ENCODE measurements at regions of chr12 and their contacts with region 1.

Region 1: DNA sequence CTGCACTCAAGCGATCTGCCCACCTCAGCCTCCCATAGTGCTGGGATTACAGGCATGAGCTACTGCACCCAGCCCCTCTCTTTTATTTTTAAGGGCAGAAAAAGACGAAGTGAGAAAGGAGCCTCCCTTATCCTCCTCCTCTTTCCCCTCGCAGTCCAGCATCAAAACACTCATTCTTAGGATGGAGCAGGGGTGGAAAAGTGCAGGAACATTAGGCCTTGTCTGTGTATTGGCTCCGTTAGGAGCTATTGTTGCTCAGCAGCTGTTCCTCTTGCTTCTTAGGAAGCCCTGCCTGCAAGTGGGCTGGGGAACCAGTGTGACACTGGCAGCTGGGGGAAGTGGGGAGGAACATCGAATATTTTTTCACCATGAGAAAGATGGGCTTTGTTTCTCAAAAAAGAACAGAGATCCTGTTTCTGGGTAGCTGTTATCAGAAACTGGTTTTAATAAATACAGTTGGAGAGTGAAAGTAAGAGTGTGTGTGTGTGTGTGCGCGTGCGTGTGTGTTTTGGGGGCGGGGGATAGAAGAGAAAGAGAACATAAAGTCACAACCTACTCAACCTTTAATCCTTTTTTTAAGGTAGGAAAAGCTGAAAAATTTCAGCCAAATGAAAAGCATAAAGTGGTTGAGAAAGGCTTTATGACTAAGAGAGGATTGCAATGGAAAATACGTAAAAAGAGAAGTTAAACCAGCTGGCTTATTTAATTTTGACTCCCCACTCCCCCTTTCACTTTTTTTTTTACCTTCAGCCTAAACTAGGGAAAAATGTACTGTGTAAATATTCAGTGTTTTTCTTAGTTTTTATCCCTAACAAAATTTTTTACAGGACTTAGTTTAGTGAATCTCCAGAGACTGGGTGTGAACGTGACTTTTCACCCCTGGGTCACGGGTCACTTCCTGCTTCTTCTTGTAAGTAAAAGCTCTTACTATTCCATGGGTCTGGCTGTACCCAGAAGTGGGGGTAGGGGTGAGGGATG is 197.2 kb upstream of the PLEKHG7 start:
- DNase-seq: peak; percentile 64 to 83 (median 74)
- H3K4me3 ChIP-seq: peak overlapping the region in 2 of 3 experiments; percentile 23 to 50
- H3K4me3 Mint-ChIP-seq: peak overlapping the region; percentile 40 to 78
- H3K27ac ChIP-seq: peak overlapping the region; percentile 93 to 99
- H3K27ac Mint-ChIP-seq: peak overlapping the region; percentile 98 to 100 (median 99)
- H3K4me1 ChIP-seq: peaks cover 43 to 52% of the 10 kb centered on the region in 2 donors
- H3K4me1 Mint-ChIP-seq: peaks cover 50% of the 10 kb centered on the region
- H3K27me3 ChIP-seq: no peaks in the 10 kb centered on the region
- H3K27me3 Mint-ChIP-seq: peaks cover 0 to 3% (median 0%) of the 10 kb centered on the region in 3 donors
- CTCF ChIP-seq: no peak

Region 2: GRCh38 chr12:91877022-91877421 is 628.5 kb before region 1 on chr12:
- intact Hi-C with region 1: loop called in 1 of 2 experiments (anchors 10 kb)
- DNase-seq: peak; percentile 94 to 98 (median 97)
- H3K4me3 ChIP-seq: peak overlapping the region in 1 of 3 experiments; percentile 22
- H3K4me3 Mint-ChIP-seq: peak overlapping the region in 1 of 2 donors; percentile 77
- H3K27ac ChIP-seq: peak overlapping the region; percentile 46 to 89
- H3K27ac Mint-ChIP-seq: peak overlapping the region; percentile 87 to 97 (median 93)
- H3K4me1 ChIP-seq: peaks cover 26 to 34% of the 10 kb centered on the region in 2 donors
- H3K4me1 Mint-ChIP-seq: peaks cover 29% of the 10 kb centered on the region
- H3K27me3 ChIP-seq: no peaks in the 10 kb centered on the region
- H3K27me3 Mint-ChIP-seq: peaks cover 0 to 2% (median 1%) of the 10 kb centered on the region in 3 donors
- CTCF ChIP-seq: no peak

Region 3: DNA sequence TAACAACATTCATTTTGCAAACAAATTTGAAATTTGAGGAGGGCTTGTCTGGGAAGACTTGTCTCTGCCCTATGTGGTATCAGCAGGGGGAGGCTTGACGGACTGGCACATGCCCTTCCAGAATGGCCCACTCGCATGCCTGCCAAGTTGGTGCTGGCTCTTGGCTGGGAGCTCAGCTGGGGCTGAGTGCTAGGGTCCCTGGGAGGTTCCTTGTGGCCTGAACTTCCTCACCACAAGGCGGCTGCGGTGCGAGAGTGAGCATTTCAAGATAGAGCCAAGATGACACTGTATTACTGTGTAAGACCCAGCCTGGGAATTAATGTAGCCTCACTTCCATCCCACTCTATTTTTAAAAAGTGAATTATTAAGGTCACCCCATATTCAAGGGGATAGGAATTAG is 74.4 kb before region 1 on chr12:
- intact Hi-C with region 1: loop called in 1 of 2 experiments (anchors 10 kb)
- DNase-seq: peak in 2 of 3 donors; percentile 34 to 50
- H3K4me3 ChIP-seq: no peak overlapping the region
- H3K4me3 Mint-ChIP-seq: no peak overlapping the region
- H3K27ac ChIP-seq: no peak overlapping the region
- H3K27ac Mint-ChIP-seq: no peak overlapping the region
- H3K4me1 ChIP-seq: peaks cover 9 to 14% of the 10 kb centered on the region in 2 donors
- H3K4me1 Mint-ChIP-seq: peaks cover 26% of the 10 kb centered on the region
- H3K27me3 ChIP-seq: no peaks in the 10 kb centered on the region
- H3K27me3 Mint-ChIP-seq: peaks cover 0 to 5% (median 3%) of the 10 kb centered on the region in 3 donors
- CTCF ChIP-seq: peak; percentile 30

Region 4: DNA sequence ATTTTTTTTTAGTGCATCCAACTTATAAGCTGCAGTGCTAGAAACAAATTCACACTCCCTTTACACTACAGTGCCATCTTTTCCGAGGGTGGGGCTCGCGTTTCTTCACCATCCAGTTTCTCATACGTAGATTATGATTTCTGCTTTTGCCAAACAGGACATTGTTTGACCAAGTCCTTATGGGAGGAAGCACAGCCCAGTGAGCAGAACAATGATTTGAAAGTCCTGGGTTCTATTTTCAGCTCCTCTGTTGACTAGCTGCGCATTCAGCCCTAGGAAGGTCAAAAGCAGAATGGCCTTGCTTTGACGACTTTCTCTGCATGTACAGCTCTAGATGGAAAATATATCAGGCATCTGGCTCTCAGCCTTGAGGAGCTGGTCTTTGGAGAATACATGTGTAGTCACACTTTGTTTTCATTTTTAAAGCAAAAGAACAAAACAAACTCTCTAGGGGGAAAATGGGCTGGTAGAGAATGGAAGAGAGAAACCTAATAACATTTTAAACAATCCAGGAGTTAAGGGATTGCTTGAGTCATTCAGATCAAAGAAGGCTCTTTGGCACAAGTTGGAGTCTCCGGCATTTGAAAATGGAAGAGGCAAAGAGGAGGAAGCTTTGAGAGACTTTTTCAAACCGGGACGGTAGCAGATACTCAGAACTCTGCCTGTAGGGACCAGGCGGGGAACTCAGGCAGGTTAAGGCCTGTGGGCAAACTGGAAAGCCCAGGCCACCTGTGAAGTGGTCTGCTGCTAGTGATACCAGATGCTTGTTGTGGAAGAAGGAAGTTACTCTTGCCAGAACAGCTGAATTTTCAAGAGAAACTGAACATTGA is 60.1 kb before region 1 on chr12:
- intact Hi-C with region 1: loop called in 1 of 2 experiments (anchors 5 kb)
- DNase-seq: peak; percentile 46 to 54 (median 49)
- H3K4me3 ChIP-seq: peak overlapping the region in 2 of 3 experiments; percentile 5 to 13
- H3K4me3 Mint-ChIP-seq: peak overlapping the region in 1 of 2 donors; percentile 60
- H3K27ac ChIP-seq: peak overlapping the region; percentile 45 to 82
- H3K27ac Mint-ChIP-seq: peak overlapping the region; percentile 91 to 98 (median 94)
- H3K4me1 ChIP-seq: peaks cover 19 to 23% of the 10 kb centered on the region in 2 donors
- H3K4me1 Mint-ChIP-seq: peaks cover 31% of the 10 kb centered on the region
- H3K27me3 ChIP-seq: no peaks in the 10 kb centered on the region
- H3K27me3 Mint-ChIP-seq: peaks cover 2 to 6% (median 3%) of the 10 kb centered on the region in 3 donors
- CTCF ChIP-seq: no peak

Region 5: GRCh38 chr12:92539113-92539749 is 33.7 kb after region 1 on chr12:
- intact Hi-C with region 1: loop called in 1 of 2 experiments (anchors 5 kb)
- DNase-seq: peak; percentile 74 to 95 (median 86)
- H3K4me3 ChIP-seq: no peak overlapping the region
- H3K4me3 Mint-ChIP-seq: peak overlapping the region in 1 of 2 donors; percentile 12
- H3K27ac ChIP-seq: peak overlapping the region in 1 of 2 donors; percentile 64
- H3K27ac Mint-ChIP-seq: peak overlapping the region in 6 of 7 donors; percentile 47 to 95 (median 71)
- H3K4me1 ChIP-seq: peaks cover 23 to 29% of the 10 kb centered on the region in 2 donors
- H3K4me1 Mint-ChIP-seq: peaks cover 47% of the 10 kb centered on the region
- H3K27me3 ChIP-seq: no peaks in the 10 kb centered on the region
- H3K27me3 Mint-ChIP-seq: peaks cover 0 to 2% (median 0%) of the 10 kb centered on the region in 3 donors
- CTCF ChIP-seq: no peak

Region 6: DNA sequence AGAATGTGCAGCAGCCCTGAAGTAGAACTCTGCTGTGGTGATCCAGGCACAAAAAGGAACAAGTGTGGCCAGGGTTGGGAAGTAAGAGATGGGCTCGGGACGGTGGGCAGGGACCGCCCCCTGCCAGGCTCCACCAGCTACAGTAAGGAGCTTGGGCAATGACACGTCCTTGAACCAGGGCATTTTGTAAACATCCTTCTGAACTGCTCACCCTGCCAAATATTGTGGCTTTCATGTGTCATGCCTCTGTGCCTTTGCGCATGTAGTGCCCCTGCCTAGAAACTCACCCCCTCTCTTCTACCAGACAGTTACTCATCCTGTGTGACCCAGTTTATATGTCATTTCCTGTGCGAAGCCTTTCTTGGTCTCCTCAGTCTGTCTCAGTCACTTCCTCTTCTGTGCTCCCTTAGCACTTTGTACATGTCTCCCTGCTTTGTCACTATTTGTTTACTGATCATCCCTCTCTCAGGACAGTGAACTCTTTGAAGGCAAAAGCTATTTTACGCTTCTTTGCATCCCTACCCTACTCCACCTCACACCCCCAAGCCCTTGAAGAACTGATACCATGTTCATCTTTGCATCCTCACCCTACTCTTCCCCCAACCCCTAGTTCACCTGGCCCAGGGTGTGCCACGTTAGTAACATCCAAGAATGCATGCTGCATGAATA is 88.3 kb after region 1 on chr12:
- intact Hi-C with region 1: loop called (anchors 5 to 10 kb)
- DNase-seq: peak; percentile 96 to 99 (median 97)
- H3K4me3 ChIP-seq: no peak overlapping the region
- H3K4me3 Mint-ChIP-seq: peak overlapping the region; percentile 26 to 66
- H3K27ac ChIP-seq: peak overlapping the region; percentile 44 to 80
- H3K27ac Mint-ChIP-seq: peak overlapping the region; percentile 78 to 96 (median 94)
- H3K4me1 ChIP-seq: peaks cover 11 to 12% of the 10 kb centered on the region in 2 donors
- H3K4me1 Mint-ChIP-seq: peaks cover 29% of the 10 kb centered on the region
- H3K27me3 ChIP-seq: no peaks in the 10 kb centered on the region
- H3K27me3 Mint-ChIP-seq: peaks cover 0 to 8% (median 2%) of the 10 kb centered on the region in 3 donors
- CTCF ChIP-seq: no peak

Region 7: DNA sequence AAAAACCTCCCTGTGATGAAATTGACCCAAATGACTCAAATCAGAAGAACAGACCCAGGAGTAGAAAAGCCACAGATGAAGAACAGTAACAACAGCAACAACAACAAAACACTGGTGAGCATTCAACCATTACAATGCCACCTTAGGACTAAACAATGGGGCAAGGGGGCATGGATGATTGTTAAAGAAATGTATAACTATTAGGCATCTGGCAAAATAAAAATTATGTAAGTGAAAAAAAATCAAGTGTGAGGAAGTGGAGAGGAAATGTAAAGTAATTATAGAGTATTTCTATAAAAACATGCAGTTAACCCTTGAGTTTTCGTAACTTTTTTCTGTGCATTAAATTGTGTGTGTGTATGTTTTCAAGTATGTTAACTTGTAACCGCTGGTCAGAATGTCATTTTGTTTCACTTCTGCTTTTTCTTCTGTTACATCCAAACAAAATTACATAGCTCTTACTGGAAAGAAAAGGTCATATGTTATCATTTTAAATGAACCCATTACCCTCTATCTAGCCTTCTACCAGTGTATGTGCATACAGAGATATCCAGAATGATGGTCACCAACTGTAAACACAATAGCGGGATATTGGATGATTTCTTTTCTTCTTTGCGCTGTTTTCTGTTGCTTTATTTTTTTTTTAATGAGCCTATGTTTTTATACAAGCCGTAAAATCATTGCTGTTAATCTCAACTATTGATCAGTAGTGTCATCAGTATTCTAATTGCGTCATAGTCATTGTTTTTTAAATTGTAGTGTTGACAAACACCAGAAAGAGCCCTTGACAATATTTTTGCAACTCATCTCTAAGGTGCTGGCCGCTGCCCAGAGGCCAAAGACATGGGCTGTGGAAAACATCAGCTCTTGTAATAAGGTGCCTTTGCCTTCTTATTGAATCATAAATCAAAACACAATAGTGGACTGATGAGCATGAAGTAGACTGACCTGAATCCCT is 1342.3 kb after region 1 on chr12:
- intact Hi-C with region 1: loop called in 1 of 2 experiments (anchors 10 kb)
- DNase-seq: peak; percentile 78 to 91 (median 82)
- H3K4me3 ChIP-seq: peak overlapping the region in 1 of 3 experiments; percentile 17
- H3K4me3 Mint-ChIP-seq: peak overlapping the region in 1 of 2 donors; percentile 61
- H3K27ac ChIP-seq: peak overlapping the region; percentile 86 to 93
- H3K27ac Mint-ChIP-seq: peak overlapping the region; percentile 94 to 99 (median 97)
- H3K4me1 ChIP-seq: peaks cover 33 to 51% of the 10 kb centered on the region in 2 donors
- H3K4me1 Mint-ChIP-seq: peaks cover 38% of the 10 kb centered on the region
- H3K27me3 ChIP-seq: no peaks in the 10 kb centered on the region
- H3K27me3 Mint-ChIP-seq: peaks cover 0 to 3% (median 2%) of the 10 kb centered on the region in 3 donors
- CTCF ChIP-seq: no peak

Measured in CD14-positive monocyte (primary cell).